ENCODE measurements at regions of chr2 and their contacts with region 1.

Region 1: DNA sequence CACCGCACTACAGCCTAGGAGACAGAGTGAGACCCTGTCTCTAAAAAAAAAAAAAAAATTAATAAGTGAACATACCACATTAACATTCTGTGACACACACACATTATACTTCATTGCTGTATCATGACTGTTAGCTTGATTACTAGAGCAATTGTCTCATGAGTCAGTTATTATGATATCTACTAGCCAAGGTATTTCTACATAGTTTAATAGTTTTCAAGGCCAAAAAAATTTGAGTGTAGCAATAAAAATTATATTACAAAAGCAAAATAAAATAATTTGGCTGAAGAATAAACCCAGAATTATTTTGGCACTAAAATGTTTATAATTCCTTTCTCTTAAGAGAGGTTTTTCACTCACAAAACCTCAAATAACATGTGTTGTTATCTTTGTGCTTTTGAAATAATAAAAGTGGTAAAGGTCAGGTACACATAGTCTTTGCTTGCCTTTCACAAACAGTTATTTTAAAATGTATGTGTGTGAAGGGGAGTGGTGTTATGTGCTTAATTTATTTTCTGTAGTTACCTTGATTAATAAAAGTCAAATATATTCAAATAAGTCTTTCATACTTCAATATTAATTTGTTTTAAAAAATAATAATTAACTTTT is 136.9 kb upstream of the SPOPL start:
- DNase-seq: no peak
- H3K4me3 ChIP-seq: no peak overlapping the region
- H3K27ac ChIP-seq: no peak overlapping the region
- H3K4me1 ChIP-seq: peaks cover 0 to 13% of the 10 kb centered on the region in 2 donors
- H3K27me3 ChIP-seq: no peaks in the 10 kb centered on the region
- CTCF ChIP-seq: no peak

Region 2: GRCh38 chr2:137969418-137969765 is 395.3 kb before region 1 on chr2:
- intact Hi-C with region 1: loop called (anchors 5 kb)
- DNase-seq: peak in 1 of 2 donors; percentile 70
- H3K4me3 ChIP-seq: peak overlapping the region in 1 of 2 donors; percentile 6
- H3K27ac ChIP-seq: peak overlapping the region; percentile 90 to 93
- H3K4me1 ChIP-seq: peaks cover 7 to 13% of the 10 kb centered on the region in 2 donors
- H3K27me3 ChIP-seq: no peaks in the 10 kb centered on the region
- CTCF ChIP-seq: no peak

Region 3: GRCh38 chr2:138475277-138475776 is 110.7 kb after region 1 on chr2:
- intact Hi-C with region 1: no loop called
- DNase-seq: no peak
- H3K4me3 ChIP-seq: no peak overlapping the region
- H3K27ac ChIP-seq: no peak overlapping the region
- H3K4me1 ChIP-seq: no peaks in the 10 kb centered on the region
- H3K27me3 ChIP-seq: no peaks in the 10 kb centered on the region
- CTCF ChIP-seq: no peak